Vagina (tissue), 2 donors: ENCODE measurements at regions of chr11 and their contacts with region 1.

Region 1: DNA sequence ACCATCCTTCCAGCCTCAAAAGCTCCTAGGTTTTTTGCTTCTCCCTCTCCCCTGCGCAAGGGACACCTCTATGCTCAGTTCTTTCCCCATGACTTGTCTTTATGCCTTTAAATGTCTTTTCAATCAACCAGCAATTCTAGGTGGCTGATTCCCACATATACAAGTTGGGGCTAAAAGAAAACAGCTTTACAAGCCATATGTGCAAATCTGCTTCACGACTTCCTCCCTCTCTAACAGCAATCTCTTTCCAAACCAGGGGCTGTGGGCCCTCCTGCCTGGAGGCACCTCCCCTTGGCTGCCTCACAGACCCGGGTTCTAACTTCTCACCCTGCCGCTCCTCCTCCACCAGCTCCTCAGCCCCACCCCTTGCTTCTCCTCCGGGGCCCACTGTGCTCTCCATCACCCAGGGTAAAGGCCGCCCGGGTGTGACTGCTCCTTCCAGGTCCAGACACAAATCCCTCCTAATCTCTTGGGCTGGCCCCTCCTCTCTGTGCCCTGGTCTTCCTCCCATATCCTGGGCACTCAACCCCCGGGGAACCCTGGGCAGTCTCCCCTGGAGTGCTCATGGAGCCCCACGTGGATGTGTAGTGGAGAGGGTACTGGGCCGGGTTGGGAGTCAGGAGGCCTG is 14.1 kb downstream of the TMPRSS13 start:
- DNase-seq: no peak
- H3K4me3 ChIP-seq: no peak overlapping the region
- H3K27ac ChIP-seq: no peak overlapping the region
- H3K4me1 ChIP-seq: no peaks in the 10 kb centered on the region
- H3K27me3 ChIP-seq: no peaks in the 10 kb centered on the region
- CTCF ChIP-seq: no peak
- POLR2A ChIP-seq: no peak

Region 2: DNA sequence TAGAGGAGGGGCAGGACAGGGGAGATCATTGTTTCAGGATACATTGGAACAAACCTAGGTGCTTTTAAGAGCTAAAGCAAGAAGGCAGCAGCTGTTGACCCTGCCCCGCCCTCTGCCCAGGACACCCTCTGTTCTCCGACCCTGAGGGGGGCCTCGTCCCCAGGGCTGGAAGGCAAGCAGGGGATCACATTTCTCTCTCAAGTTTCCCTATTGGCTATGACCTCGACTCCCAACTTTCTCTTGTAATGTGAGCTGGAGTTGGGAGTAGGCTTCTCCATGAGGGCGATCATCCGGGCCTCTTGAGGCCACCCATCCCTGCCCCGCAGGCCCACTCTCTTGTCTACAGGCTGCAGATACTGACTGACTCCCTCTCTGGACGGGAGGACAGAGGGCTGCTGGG is 155.8 kb before region 1 on chr11:
- intact Hi-C with region 1: no loop called
- DNase-seq: no peak
- H3K4me3 ChIP-seq: no peak overlapping the region
- H3K27ac ChIP-seq: no peak overlapping the region
- H3K4me1 ChIP-seq: no peaks in the 10 kb centered on the region
- H3K27me3 ChIP-seq: no peaks in the 10 kb centered on the region
- CTCF ChIP-seq: no peak
- POLR2A ChIP-seq: no peak

Region 3: GRCh38 chr11:117932067-117932370 is 16.9 kb after region 1 on chr11:
- intact Hi-C with region 1: loop called (anchors 2 kb)
- DNase-seq: no peak
- H3K4me3 ChIP-seq: no peak overlapping the region
- H3K27ac ChIP-seq: no peak overlapping the region
- H3K4me1 ChIP-seq: peaks cover 8% of the 10 kb centered on the region
- H3K27me3 ChIP-seq: no peaks in the 10 kb centered on the region
- CTCF ChIP-seq: no peak
- POLR2A ChIP-seq: no peak